HCT116 (cell line): ENCODE measurements at regions of chr9 and their contacts with region 1.

Region 1: DNA sequence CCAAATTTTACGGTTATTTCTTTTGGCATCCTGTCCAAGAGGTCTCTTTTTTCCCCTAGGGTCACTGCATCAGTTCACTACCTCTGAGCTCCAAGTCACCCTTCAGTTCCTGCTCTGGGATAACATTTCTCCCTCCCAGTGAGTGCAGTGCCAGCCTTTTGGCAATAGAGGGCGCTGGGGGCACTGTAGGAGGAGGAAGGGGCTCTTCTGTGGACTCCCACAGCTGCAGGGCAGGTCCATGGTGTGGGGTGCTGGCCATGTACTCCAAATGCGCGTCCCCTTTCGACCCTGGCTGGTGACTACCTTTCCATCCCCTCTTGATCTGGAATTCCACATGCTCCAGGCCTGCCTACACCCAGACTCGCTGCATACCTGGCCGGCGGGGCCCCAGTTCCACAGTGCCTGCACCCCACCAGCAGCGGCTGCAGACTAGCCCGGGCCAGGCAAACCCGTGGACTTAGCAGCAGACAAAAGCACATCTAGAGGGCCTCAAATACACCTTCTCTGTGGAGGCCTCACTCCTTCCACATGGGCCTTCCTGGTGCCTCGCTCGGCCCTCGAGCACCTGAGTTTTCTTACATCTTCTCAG is 20.4 kb upstream of the NINJ1 start:
- DNase-seq: no peak
- ATAC-seq: peak; percentile 89
- H3K4me3 ChIP-seq: no peak overlapping the region
- H3K27ac ChIP-seq: no peak overlapping the region
- H3K4me1 ChIP-seq: peaks cover 0 to 2% of the 10 kb centered on the region in 2 experiments; a peak in 3 of 4 replicates
- H3K27me3 ChIP-seq: no peaks in the 10 kb centered on the region
- CTCF ChIP-seq: peak; percentile 67 to 93 (median 93); a peak in 5 of 6 replicates
- POLR2A ChIP-seq: no peak
- RAD21 ChIP-seq: peak; percentile 70

Region 2: DNA sequence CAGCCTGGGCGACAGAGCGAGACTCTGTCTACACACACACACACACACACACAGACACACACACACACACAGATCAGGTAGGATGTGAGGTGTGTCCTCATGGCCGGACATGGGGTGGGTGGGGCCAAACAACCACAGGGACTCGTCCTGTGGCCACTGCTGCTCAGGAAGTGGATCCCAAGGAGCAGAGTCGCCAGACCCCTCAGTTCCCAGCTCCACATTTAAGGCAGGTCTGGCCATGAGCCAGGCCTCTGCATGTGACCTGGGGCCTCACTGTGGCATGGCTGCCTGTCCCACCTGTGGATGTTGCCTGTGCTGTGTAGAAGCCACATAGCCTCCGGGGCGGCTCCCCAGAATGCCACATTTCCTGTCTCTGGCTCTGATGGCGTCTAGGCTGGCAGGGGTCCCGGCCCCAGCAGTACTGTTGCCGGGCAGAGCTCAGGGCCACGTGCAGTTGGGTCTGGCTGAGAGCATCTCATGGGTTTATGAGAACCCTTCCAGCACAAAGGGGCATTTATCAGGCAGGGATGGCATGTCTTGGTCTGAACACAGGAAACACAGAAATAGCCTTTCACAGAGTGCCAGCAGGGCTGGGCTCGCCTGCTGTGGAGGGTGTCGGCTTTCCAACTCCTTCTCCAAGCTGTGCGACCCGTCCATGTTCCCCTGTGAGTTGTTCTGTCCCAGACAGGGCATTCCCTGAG is 10.4 kb before region 1 on chr9:
- CTCF ChIA-PET with region 1: interaction called, 18 read pairs
- POLR2A ChIA-PET with region 1: no interaction called
- RAD21 ChIA-PET with region 1: no interaction called
- intact Hi-C with region 1: no loop called
- DNase-seq: no peak
- ATAC-seq: peak; percentile 63
- H3K4me3 ChIP-seq: no peak overlapping the region
- H3K27ac ChIP-seq: peak overlapping the region; percentile 19; the same call in 1 of the 2 replicates
- H3K4me1 ChIP-seq: peaks cover 8 to 16% of the 10 kb centered on the region in 2 experiments
- H3K27me3 ChIP-seq: no peaks in the 10 kb centered on the region
- CTCF ChIP-seq: no peak
- POLR2A ChIP-seq: no peak
- RAD21 ChIP-seq: no peak